Activated T-helper 1 cell treated with anti-CD3 and anti-CD28 coated beads, Interleukin-12 subunit alpha, Interleukin-12 subunit beta, Interleukin-2, Interleukin-4 antibody, amounts not matched to agents 30 ng/mL and 10 ng/mL and 1 ng/mL, durations not matched to agents 14 hours and 24 hours and 36 hours (primary cell): ENCODE measurements at regions of chr20 and their contacts with region 1.

Region 1: GRCh38 chr20:50958615-50959542 is at the start of gene MOCS3:
- DNase-seq: peak; percentile 80
- H3K4me3 Mint-ChIP-seq: peak within 1 kb of the TSS; percentile 99
- H3K27ac Mint-ChIP-seq: peak within 1 kb of the TSS; percentile 92
- H3K4me1 Mint-ChIP-seq: peaks cover 50% of the 10 kb centered on the region
- H3K27me3 Mint-ChIP-seq: no peaks in the 10 kb centered on the region
- total RNA-seq, gene MOCS3: 6.2 and 6.7 TPM in 2 replicates

Region 2: GRCh38 chr20:50815162-50815989 is 143.5 kb before region 1 on chr20:
- intact Hi-C with region 1: loop called (anchors 1 kb)
- DNase-seq: no peak
- H3K4me3 Mint-ChIP-seq: peak overlapping the region; percentile 61
- H3K27ac Mint-ChIP-seq: peak overlapping the region; percentile 77
- H3K4me1 Mint-ChIP-seq: peaks cover 38% of the 10 kb centered on the region
- H3K27me3 Mint-ChIP-seq: peaks cover 4% of the 10 kb centered on the region

Region 3: GRCh38 chr20:50891138-50891537 is 67.7 kb before region 1 on chr20:
- intact Hi-C with region 1: no loop called
- DNase-seq: no peak
- H3K4me3 Mint-ChIP-seq: no peak overlapping the region
- H3K27ac Mint-ChIP-seq: no peak overlapping the region
- H3K4me1 Mint-ChIP-seq: peaks cover 8% of the 10 kb centered on the region
- H3K27me3 Mint-ChIP-seq: no peaks in the 10 kb centered on the region